ENCODE measurements at regions of chr1 and their contacts with region 1.

Region 1: GRCh38 chr1:45339789-45340570 is at the starts of genes MUTYH and TOE1:
- DNase-seq: peak; percentile 98
- ATAC-seq: peak; percentile 88
- H3K4me3 Mint-ChIP-seq: peak within 1 kb of the TSS; percentile 99
- H3K27ac Mint-ChIP-seq: peak within 1 kb of the TSS; percentile 99
- H3K4me1 Mint-ChIP-seq: peaks cover 54% of the 10 kb centered on the region
- H3K27me3 Mint-ChIP-seq: no peaks in the 10 kb centered on the region
- total RNA-seq, gene MUTYH: 65.3 to 67.2 TPM
- total RNA-seq, gene TOE1: 21.4 to 26.5 TPM

Region 2: DNA sequence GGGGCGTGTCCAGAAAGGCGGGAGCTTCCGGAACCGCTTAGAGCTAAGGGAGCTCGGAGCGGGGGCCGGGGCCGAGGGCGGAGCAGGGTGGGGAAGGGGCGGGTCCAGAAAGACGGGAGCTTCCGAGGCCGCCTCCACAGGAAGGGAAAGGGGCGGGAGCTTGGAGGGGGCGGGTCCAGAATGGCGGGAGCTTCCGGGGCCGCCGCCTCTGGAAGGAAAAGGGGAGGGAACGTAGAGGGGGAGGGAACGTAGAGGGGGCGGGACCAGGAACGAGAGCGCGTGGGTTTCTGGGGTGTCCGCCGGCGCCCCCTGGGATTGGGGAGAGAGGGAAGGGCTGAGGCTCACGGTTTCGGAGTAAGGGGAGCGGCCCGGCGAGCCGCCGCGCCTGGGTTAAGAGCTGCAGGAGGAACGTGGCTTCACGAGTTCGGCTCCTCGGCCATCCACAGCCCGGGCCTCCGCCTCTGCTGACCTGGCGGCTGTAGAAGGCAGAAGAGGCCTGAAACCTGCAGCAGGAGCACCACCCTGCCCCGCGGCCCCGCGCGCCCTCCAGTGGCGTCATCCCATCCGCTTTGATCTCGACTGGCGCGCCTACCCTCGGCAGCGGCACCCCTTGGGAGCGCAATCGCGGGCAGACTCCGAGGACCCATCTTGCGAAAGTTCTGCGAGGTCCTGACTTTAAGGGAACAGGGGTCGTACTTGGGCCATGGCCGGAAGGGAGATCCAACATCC is 36.2 kb before region 1 on chr1:
- CTCF ChIA-PET with region 1: interaction called, 21 read pairs
- DNase-seq: peak; percentile 99
- ATAC-seq: peak; percentile 89
- H3K4me3 Mint-ChIP-seq: peak overlapping the region; percentile 92
- H3K27ac Mint-ChIP-seq: peak overlapping the region; percentile 97
- H3K4me1 Mint-ChIP-seq: peaks cover 41% of the 10 kb centered on the region
- H3K27me3 Mint-ChIP-seq: no peaks in the 10 kb centered on the region

Region 3: GRCh38 chr1:45326627-45327623 is 13.1 kb before region 1 on chr1 and contains the start of gene HPDL:
- CTCF ChIA-PET with region 1: interaction called, 35 read pairs
- DNase-seq: peak; percentile 83
- ATAC-seq: peak; percentile 89
- H3K4me3 Mint-ChIP-seq: peak within 1 kb of the TSS; percentile 80
- H3K27ac Mint-ChIP-seq: peak within 1 kb of the TSS; percentile 83
- H3K4me1 Mint-ChIP-seq: peaks cover 24% of the 10 kb centered on the region
- H3K27me3 Mint-ChIP-seq: no peaks in the 10 kb centered on the region
- total RNA-seq, gene HPDL: 16.3 to 23.4 TPM

Region 4: DNA sequence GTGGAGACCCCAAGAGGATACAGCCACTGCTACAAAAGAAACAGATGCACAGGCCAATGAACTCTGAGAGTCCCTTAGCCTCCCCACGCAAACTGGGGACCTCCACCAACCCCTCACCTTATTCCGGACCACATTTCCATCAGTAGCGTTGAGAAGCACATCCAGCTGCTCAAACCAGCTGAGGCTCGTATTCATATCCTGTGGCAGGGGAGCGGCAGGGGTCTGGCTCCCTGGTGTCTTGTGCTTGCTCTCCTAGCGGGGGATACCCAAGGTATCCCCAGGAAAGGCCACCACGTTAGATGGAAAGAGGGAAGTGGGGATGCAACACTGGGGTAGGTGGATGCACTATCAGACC is 159.4 kb after region 1 on chr1:
- CTCF ChIA-PET with region 1: interaction called, 11 read pairs
- DNase-seq: peak; percentile 51
- ATAC-seq: peak; percentile 3
- H3K4me3 Mint-ChIP-seq: peak overlapping the region; percentile 95
- H3K27ac Mint-ChIP-seq: peak overlapping the region; percentile 93
- H3K4me1 Mint-ChIP-seq: peaks cover 39% of the 10 kb centered on the region
- H3K27me3 Mint-ChIP-seq: no peaks in the 10 kb centered on the region